ENCODE measurements at regions of chr6 and their contacts with region 1.

Region 1: DNA sequence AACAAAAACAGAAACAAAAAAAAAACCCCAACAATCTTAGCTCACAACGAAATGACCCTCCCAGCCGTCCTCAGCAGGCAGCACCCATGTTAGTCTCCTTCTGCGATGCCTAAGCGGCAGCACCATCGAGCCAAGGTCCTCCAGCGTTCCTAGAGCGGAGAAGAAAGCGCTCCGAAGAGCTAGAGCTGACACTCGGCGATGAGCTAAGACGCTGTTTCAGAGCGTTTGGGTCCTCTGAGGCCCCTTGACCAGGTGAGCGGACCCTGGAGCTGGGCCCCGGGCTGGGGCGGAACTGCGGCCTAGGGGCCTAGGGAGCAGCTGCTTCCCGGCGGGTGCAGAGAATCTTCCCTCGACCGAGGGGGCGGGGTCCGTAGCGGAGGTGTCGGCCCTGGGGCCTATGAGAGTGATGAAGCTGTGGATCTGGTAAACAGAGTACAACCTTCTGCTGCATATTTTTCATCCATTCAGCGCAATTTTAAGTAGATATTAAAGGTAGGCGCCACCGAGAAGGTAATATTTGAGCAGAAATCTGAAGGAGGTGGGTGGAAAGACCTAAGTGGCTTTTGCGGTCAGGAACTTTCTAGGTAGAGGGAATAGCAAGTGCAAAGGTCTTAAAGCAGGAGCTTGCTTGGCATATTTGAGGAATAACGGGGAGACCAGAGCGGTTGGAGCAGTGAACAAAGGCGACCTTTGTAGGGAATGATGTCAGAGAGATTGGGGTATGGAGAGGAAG is at the start of gene ZSCAN26:
- DNase-seq: peak; percentile 88
- ATAC-seq: peak; percentile 93
- H3K4me3 ChIP-seq: peak within 1 kb of the TSS; percentile 83 to 86
- H3K27ac ChIP-seq: peak within 1 kb of the TSS; percentile 71
- H3K4me1 ChIP-seq: peaks cover 11 to 39% of the 10 kb centered on the region in 2 experiments
- H3K27me3 ChIP-seq: no peaks in the 10 kb centered on the region
- CTCF ChIP-seq: no peak
- POLR2A ChIP-seq: peak; percentile 75
- RAD21 ChIP-seq: 0 out of 2 replicates have a peak, but pooled peaks have one; percentile 1
- total RNA-seq, gene ZSCAN26: 10.3 TPM

Region 2: DNA sequence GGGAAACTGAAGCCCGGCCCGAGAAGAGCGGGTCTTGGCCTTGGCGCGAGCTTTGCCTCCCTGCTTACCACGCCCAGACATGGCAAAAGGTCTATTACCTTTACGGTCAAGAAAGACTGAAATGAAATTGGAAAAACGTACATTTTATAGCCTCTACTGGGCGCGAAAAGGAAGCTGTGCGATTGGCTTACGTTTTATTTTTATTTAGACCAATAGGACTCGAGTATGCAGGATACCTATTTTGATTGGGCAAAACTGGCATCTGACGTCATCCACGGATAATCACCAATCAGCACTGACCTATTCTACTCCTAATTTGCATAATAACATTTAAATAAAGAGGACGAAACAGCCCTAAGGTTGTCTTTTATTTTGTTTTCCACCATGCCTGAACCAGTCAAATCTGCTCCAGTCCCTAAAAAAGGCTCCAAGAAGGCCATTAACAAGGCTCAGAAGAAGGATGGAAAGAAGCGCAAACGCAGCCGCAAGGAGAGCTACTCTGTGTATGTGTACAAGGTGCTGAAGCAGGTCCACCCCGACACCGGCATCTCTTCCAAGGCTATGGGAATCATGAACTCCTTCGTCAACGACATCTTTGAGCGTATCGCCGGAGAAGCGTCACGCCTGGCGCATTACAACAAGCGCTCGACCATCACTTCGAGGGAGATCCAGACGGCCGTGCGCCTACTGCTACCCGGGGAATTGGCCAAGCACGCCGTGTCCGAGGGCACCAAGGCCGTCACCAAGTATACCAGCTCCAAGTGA is 452.3 kb before region 1 on chr6:
- CTCF ChIA-PET with region 1: no interaction called
- POLR2A ChIA-PET with region 1: no interaction called
- RAD21 ChIA-PET with region 1: no interaction called
- intact Hi-C with region 1: no loop called
- DNase-seq: peak; percentile 93
- ATAC-seq: peak; percentile 69
- H3K4me3 ChIP-seq: peak overlapping the region; percentile 29 to 52
- H3K27ac ChIP-seq: peak overlapping the region; percentile 88
- H3K4me1 ChIP-seq: peaks cover 35 to 52% of the 10 kb centered on the region in 2 experiments
- H3K27me3 ChIP-seq: no peaks in the 10 kb centered on the region
- CTCF ChIP-seq: no peak
- POLR2A ChIP-seq: peak; percentile 73
- RAD21 ChIP-seq: no peak

Region 3: DNA sequence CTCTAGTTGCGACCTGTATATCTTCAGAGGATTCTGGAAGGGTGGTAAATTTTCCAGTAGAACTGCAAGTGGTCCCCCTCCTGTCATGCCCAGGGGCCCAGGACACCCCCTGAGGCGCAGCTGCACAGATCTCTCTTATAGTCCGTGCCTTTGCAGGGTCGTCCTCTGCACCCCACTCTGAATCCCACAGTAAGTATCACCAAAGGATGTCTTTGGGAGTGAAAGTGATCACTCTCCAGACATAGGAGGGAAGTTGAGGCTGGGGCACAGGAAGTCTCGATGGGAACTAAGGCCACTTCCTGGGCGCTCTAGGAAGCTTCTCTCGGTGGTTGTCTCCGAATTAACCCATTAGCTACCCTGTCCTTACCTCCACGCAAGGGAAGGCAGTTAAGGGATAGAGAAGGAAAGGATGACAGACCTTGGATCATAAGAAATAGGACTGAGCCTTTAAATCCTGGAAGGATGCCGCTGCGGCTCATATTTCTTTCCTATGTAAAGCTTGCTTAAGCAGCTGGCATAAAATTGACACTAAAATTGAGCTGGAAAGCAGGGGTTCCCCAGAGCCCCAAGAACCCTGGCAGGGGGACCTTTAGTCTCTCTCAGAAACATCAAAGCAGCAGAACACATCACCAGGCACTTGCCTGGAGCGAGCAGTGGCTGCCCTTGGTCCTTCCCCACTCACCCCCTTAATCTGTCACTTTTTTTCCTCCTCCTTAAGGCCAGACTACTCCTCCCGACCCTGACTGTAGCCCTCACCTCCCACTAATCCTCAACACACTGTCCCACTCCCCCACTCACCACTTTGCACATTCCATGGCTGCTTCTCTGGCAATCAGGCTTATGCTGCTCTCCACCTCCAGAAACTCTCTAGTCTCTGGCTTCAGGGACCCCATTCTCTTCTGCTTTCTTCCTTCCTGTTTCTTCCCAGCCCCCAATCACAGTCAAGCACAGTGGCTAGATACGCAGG is 14.8 kb before region 1 on chr6 and contains the start of gene ZKSCAN4:
- CTCF ChIA-PET with region 1: no interaction called
- POLR2A ChIA-PET with region 1: interaction called, 13 read pairs
- RAD21 ChIA-PET with region 1: interaction called, 5 read pairs
- intact Hi-C with region 1: loop called (anchors 1 kb)
- DNase-seq: peak; percentile 90
- ATAC-seq: peak; percentile 95
- H3K4me3 ChIP-seq: peak within 1 kb of the TSS; percentile 97 to 98
- H3K27ac ChIP-seq: peak within 1 kb of the TSS; percentile 44
- H3K4me1 ChIP-seq: peaks cover 7 to 15% of the 10 kb centered on the region in 2 experiments; a peak in 3 of 4 replicates
- H3K27me3 ChIP-seq: no peaks in the 10 kb centered on the region
- CTCF ChIP-seq: no peak
- POLR2A ChIP-seq: peak; percentile 17
- RAD21 ChIP-seq: peak; percentile 17; the same call in 1 of the 2 replicates
- total RNA-seq, gene ZKSCAN4: 4.8 TPM

Region 4: DNA sequence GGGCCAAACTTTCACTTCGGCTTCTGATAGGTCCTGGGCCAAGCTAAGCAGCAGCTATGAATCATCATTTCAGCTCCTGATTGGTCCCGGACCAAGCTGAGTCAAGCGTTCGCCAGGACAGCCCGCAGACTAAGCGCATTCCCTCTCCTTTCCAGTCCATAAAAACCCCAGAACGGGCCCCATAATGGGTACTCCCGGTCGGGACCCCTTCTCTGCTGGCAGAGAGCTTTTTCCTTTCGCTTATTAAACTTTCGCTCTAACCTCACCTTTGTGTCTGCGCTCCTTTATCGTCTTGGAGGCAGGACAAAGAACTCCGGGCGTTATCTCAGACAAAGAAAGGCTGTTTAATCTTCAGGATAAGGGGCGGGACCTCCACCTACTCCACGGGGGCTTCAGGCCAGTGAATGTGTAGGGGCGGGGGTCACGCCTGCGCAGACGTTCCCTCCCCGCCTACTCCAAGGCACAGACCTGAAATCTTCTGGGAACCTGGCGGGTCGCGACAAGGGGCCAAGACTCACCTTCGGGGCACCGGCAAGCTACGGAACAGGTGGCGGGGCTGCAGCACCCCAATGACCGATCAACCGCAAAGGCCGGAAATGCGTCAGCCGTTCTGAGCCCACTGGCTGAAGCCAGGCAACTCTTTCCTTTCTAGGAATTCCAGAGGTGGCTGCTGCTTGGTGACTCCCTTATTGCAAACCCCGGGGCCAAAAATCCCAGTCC is 68.6 kb after region 1 on chr6 and contains the start of gene ZSCAN31:
- CTCF ChIA-PET with region 1: no interaction called
- POLR2A ChIA-PET with region 1: no interaction called
- RAD21 ChIA-PET with region 1: no interaction called
- intact Hi-C with region 1: loop called (anchors 5 kb)
- DNase-seq: peak; percentile 97
- ATAC-seq: peak; percentile 95
- H3K4me3 ChIP-seq: peak within 1 kb of the TSS; percentile 72 to 77
- H3K27ac ChIP-seq: peak within 1 kb of the TSS; percentile 77
- H3K4me1 ChIP-seq: peaks cover 13 to 19% of the 10 kb centered on the region in 2 experiments; a peak in 3 of 4 replicates
- H3K27me3 ChIP-seq: no peaks in the 10 kb centered on the region
- CTCF ChIP-seq: no peak
- POLR2A ChIP-seq: peak; percentile 94
- RAD21 ChIP-seq: no peak
- total RNA-seq, gene ZSCAN31: 10.1 TPM